Common myeloid progenitor, CD34-positive (primary cell): ENCODE measurements at regions of chr19 and their contacts with region 1.

Region 1: DNA sequence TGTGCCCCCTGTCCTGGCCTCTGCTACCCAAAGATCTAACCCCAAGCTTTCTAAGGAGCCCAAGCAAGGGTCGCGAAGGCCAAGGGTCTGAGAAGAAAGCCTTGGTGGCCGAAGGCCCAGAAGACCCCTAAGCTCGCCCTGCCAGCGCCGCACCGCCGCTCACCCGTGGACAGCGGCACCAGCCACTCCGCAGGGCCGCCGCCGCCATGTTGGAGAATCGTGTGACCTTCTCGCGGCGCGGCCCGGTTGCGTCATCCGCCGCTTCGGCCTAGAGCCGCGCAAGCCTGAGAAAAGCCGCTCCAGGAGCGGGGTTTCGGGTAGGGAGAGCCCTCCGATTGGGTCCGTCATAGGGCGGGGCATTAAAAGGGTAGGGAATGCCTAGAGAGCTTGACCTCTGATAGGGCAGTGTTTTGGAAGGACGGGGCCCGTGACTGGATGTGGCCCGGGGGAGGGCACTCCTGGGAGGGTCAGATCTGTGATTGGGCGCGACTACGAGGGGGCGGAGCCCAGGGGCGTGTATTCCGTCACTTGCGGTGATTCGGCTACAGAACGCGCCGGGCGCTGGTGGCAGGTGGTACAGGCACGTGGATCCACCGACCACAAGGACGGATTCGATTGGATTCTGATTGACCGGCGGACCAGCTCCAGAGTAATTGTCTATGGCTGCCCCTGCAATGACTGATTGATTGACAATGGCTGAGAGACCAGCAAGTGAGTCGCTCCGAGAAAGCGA is at the start of gene TIMM44:
- DNase-seq: peak; percentile 99 to 100 (median 100)
- H3K4me3 ChIP-seq: peak within 1 kb of the TSS; percentile 82 to 98 (median 93)
- H3K27ac ChIP-seq: peak within 1 kb of the TSS; percentile 89 to 98
- H3K4me1 ChIP-seq: peaks cover 4 to 24% (median 18%) of the 10 kb centered on the region in 4 experiments
- H3K27me3 ChIP-seq: no peaks in the 10 kb centered on the region

Region 2: GRCh38 chr19:7888145-7888825 is 55.3 kb before region 1 on chr19 and contains the start of gene LRRC8E:
- CTCF ChIA-PET with region 1: no interaction called
- POLR2A ChIA-PET with region 1: no interaction called
- DNase-seq: peak in 2 of 3 donors; percentile 50 to 58
- H3K4me3 ChIP-seq: peak within 1 kb of the TSS in 3 of 7 experiments; percentile 20 to 58 (median 46)
- H3K27ac ChIP-seq: no peak within 1 kb of the TSS
- H3K4me1 ChIP-seq: peaks cover 0 to 12% (median 9%) of the 10 kb centered on the region in 4 experiments
- H3K27me3 ChIP-seq: peaks cover 0 to 24% (median 8%) of the 10 kb centered on the region in 5 experiments

Region 3: DNA sequence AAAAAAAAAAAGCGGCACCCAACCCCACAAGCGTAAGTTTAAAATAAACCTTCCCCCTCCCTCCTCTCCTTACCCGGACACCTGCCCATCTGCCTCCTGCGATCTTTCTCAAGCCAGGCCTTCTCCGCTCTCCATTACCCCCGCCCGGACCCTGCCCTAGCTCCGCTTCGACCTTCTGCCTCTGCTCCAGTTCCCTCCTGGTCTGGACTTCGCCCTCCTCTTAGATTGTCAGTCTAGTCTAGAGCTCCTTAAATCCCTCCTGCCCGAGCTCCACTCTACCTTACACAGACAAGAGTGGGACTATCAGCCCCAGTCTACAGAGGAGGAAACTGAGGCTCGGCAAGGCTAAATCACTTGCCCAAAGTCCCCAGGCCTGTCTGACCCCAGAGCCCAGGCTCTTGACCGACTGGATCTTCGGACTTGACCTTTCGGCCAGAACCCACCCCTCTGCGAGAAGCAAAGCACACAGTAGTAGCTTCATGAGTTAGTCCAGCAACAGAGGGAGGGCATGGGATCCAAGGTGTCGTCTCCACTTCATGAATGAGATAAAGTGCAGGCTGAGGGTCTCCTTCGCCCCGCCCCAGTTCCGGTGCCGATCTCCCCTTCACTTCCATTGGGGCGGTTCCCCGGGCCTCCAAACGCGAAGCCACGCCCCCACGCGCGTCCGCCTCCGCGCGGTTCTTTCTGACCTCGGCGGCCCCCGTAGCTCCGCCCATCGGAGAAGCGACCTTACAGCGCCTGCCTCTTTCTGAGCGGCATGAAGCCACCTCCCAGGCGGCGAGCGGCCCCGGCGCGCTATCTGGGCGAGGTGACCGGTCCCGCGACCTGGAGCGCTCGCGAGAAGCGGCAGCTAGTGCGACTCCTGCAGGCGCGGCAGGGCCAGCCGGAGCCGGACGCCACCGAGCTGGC is 23.7 kb before region 1 on chr19 and contains the start of gene SNAPC2:
- CTCF ChIA-PET with region 1: interaction called, 14 read pairs
- POLR2A ChIA-PET with region 1: interaction called, 10 read pairs
- DNase-seq: peak; percentile 95 to 98 (median 98)
- H3K4me3 ChIP-seq: peak within 1 kb of the TSS; percentile 59 to 86 (median 79)
- H3K27ac ChIP-seq: peak within 1 kb of the TSS in 1 of 2 experiments; percentile 71
- H3K4me1 ChIP-seq: peaks cover 0 to 51% (median 48%) of the 10 kb centered on the region in 4 experiments
- H3K27me3 ChIP-seq: peaks cover 0 to 48% (median 15%) of the 10 kb centered on the region in 5 experiments

Region 4: GRCh38 chr19:7928736-7929701 is 14.6 kb before region 1 on chr19:
- CTCF ChIA-PET with region 1: interaction called, 20 read pairs
- POLR2A ChIA-PET with region 1: interaction called, 12 read pairs
- DNase-seq: peak; percentile 90 to 96 (median 92)
- H3K4me3 ChIP-seq: no peak overlapping the region
- H3K27ac ChIP-seq: no peak overlapping the region
- H3K4me1 ChIP-seq: peaks cover 0 to 27% (median 16%) of the 10 kb centered on the region in 4 experiments
- H3K27me3 ChIP-seq: no peaks in the 10 kb centered on the region

Region 5: GRCh38 chr19:7970716-7971448 is 27.3 kb after region 1 on chr19:
- CTCF ChIA-PET with region 1: interaction called, 16 read pairs
- POLR2A ChIA-PET with region 1: interaction called, 3 read pairs
- DNase-seq: peak; percentile 26 to 44 (median 33)
- H3K4me3 ChIP-seq: no peak overlapping the region
- H3K27ac ChIP-seq: no peak overlapping the region
- H3K4me1 ChIP-seq: peaks cover 0 to 9% (median 6%) of the 10 kb centered on the region in 4 experiments
- H3K27me3 ChIP-seq: no peaks in the 10 kb centered on the region

Region 6: DNA sequence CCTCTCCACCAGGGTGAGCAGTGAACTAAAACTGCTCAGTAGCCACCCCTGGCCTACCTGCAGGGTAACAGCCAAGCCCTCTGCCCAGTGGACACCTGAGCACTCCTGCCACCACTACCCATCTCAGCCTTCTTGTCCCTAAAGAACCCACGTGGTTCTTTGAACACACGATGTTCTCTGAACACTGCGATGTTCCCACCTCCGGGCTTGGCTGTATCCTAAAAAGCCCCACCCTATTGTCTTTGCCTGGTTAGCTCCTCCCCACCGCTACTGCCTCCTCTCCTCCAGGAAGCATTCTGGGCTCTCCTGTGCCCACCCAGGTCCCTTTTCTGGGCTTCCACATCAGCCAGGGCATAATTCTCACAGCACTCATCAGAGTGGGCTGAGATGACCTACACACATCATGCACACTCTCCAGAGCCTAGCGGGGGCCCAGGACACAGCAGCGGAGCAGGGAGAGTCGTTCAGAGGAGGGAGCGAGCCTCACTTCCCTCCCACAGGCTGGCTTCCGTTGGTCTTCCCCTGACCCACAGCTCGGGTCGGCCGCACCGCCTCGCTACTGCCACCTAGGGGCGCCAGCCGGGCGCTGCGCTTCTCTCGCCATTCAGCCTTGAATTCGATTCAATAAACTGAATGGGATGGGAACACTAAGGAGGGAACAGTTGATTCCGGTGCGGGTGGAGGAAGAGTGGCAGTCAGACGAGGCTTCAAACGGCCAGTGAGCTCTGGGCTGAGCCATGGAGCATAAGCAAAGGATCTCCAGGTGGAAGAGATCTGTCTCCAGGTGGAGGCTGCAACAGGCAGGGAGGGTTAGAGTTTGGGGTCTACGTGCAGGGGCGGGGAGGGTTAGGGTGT is 58.6 kb after region 1 on chr19:
- CTCF ChIA-PET with region 1: interaction called, 24 read pairs
- POLR2A ChIA-PET with region 1: interaction called, 6 read pairs
- DNase-seq: peak; percentile 57 to 69 (median 66)
- H3K4me3 ChIP-seq: peak overlapping the region in 6 of 7 experiments; percentile 26 to 78 (median 60)
- H3K27ac ChIP-seq: peak overlapping the region in 1 of 2 experiments; percentile 65
- H3K4me1 ChIP-seq: peaks cover 10 to 54% (median 44%) of the 10 kb centered on the region in 4 experiments
- H3K27me3 ChIP-seq: no peaks in the 10 kb centered on the region

Region 7: DNA sequence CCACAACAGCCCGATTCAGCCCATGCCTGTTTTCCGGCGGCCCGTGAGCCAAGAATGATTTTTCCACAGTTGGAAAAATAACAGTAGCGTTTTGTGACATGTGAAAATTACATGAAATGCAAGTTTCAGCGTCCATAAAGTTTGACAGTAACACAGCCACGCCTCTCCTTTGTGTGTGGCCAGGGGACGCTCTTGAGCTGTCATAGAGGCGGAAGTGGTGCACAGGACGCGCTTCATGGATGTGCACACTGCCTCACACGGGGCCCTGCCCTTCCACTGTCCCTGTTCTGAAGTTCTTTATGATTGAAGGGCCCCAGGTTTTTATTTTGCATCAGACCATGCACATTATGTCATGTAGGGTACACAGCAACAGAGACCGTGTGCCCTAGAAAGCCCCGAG is 74.2 kb after region 1 on chr19:
- CTCF ChIA-PET with region 1: no interaction called
- POLR2A ChIA-PET with region 1: no interaction called
- DNase-seq: peak; percentile 42 to 78 (median 75)
- H3K4me3 ChIP-seq: no peak overlapping the region
- H3K27ac ChIP-seq: no peak overlapping the region
- H3K4me1 ChIP-seq: peaks cover 0 to 3% (median 1%) of the 10 kb centered on the region in 4 experiments
- H3K27me3 ChIP-seq: no peaks in the 10 kb centered on the region

Region 8: GRCh38 chr19:8252922-8253589 is 309.4 kb after region 1 on chr19:
- CTCF ChIA-PET with region 1: interaction called, 11 read pairs
- POLR2A ChIA-PET with region 1: no interaction called
- DNase-seq: peak; percentile 77 to 89 (median 84)
- H3K4me3 ChIP-seq: no peak overlapping the region
- H3K27ac ChIP-seq: no peak overlapping the region
- H3K4me1 ChIP-seq: no peaks in the 10 kb centered on the region
- H3K27me3 ChIP-seq: no peaks in the 10 kb centered on the region